Heart right ventricle (tissue), 16 donors: ENCODE measurements at regions of chr3 and their contacts with region 1.

Region 1: GRCh38 chr3:146072824-146073223 is 88.2 kb downstream of the PLOD2 start:
- DNase-seq: no peak
- ATAC-seq: peak in 5 of 8 donors; percentile 29 to 81 (median 50)
- H3K4me3 ChIP-seq: no peak overlapping the region
- H3K27ac ChIP-seq: peak overlapping the region in 4 of 10 donors; percentile 3 to 67 (median 39)
- H3K4me1 ChIP-seq: peaks cover 0 to 21% (median 13%) of the 10 kb centered on the region in 9 donors
- H3K27me3 ChIP-seq: no peaks in the 10 kb centered on the region
- CTCF ChIP-seq: no peak

Region 2: GRCh38 chr3:145991119-145991518 is 81.7 kb before region 1 on chr3:
- intact Hi-C with region 1: no loop called
- DNase-seq: no peak
- ATAC-seq: no peak
- H3K4me3 ChIP-seq: no peak overlapping the region
- H3K27ac ChIP-seq: no peak overlapping the region
- H3K4me1 ChIP-seq: no peaks in the 10 kb centered on the region
- H3K27me3 ChIP-seq: no peaks in the 10 kb centered on the region
- CTCF ChIP-seq: no peak

Region 3: DNA sequence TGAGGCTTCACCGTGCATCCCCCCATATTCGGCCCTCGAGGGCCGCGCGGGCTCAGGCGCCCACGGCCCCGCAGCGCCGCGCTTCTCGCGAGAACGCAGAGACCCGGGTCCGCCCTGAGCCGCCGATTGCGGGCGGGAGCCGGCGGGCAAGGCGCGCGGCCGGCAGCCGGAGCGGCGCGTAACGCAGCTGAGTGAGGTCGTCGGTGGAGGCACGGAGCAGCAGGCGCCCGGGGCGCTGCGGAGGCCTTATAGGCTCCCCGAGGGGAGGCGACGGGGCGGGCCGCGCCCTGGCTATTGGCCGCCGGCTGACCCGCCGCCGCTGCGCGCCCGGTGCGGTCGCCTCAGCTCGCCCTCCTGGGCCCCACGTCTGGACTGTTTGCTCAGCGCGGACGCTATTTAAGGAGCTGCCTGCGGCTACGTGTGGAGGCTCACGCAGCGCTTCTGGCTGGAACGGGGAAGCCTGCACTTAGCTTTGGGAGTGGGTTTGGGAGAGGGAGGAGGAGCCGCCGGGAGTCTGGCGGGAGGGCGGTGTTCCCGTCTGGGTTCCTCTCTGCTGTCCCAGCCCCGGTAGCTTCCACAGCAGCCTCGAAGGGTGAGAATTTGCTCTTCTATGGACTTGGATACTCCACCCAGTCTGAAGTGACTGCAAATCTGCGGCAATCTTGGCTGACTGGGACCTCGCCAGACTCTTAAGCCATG is 88.3 kb after region 1 on chr3 and contains the start of gene PLOD2:
- intact Hi-C with region 1: loop called in 4 of 10 experiments (anchors 5 to 10 kb)
- DNase-seq: peak; percentile 72 to 82
- ATAC-seq: peak; percentile 72 to 95 (median 80)
- H3K4me3 ChIP-seq: peak within 1 kb of the TSS; percentile 61 to 88 (median 78)
- H3K27ac ChIP-seq: peak within 1 kb of the TSS; percentile 89 to 98 (median 94)
- H3K4me1 ChIP-seq: peaks cover 0 to 63% (median 44%) of the 10 kb centered on the region in 9 donors
- H3K27me3 ChIP-seq: peaks cover 0 to 32% (median 0%) of the 10 kb centered on the region in 7 donors
- CTCF ChIP-seq: no peak
- total RNA-seq, gene PLOD2: 12.5 to 44.6 (median 16.8) TPM

Region 4: DNA sequence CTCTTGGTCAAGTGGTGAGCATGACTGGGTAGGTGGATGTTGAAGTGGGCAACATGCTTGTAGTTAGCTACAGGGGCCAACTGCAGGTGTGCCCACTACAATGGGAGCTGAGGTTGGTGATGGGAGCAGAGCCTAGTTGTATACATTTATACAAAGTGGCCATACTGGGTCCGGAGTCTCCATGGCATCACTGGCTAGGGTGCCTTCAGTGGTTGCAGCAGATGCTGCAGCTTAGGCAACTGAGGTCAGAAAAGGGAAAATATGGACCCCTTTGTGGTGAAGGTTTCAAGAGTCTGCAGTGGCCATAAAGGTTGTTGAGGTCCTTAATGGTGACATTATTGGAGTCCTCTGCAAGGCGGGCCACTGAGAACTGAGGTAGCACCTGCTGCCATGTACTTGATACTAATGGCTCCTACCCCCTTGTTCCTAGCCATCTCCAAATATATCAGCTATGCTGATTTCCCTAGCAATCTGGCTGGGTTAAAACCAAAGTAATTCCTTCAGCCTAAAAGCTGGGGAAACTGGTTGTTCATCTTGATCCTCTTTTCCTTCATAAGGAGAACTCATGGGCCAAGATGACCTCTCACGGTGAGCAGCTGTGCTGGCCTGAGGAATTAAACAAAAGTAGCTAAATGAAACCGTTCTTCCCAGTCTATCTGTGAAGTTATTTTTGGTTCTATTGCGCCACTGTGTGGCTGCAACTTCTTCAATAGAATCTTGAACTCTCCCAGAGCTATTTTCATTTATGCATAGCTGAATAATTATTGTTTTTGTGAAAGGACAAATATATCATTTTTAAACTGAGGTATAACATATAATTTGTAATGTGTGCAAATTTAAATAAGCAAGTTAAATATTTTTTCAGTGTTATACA is 254.1 kb after region 1 on chr3:
- intact Hi-C with region 1: loop called in 7 of 10 experiments (anchors 5 to 10 kb)
- DNase-seq: peak in 1 of 2 donors; percentile 46
- ATAC-seq: peak in 7 of 8 donors; percentile 75 to 92 (median 87)
- H3K4me3 ChIP-seq: no peak overlapping the region
- H3K27ac ChIP-seq: no peak overlapping the region
- H3K4me1 ChIP-seq: no peaks in the 10 kb centered on the region
- H3K27me3 ChIP-seq: no peaks in the 10 kb centered on the region
- CTCF ChIP-seq: peak; percentile 9 to 80 (median 65)